ENCODE measurements at regions of chr1 and their contacts with region 1.

Region 1: GRCh38 chr1:78114034-78114956 is 68.5 kb downstream of the GIPC2 start:
- DNase-seq: peak; percentile 82
- H3K4me3 ChIP-seq: no peak overlapping the region
- H3K27ac ChIP-seq: no peak overlapping the region
- H3K4me1 ChIP-seq: no peaks in the 10 kb centered on the region
- H3K27me3 ChIP-seq: no peaks in the 10 kb centered on the region
- CTCF ChIP-seq: peak; percentile 96

Region 2: GRCh38 chr1:76901158-76901767 is 1213.0 kb before region 1 on chr1:
- CTCF ChIA-PET with region 1: no interaction called
- POLR2A ChIA-PET with region 1: no interaction called
- intact Hi-C with region 1: loop called (anchors 5 kb)
- DNase-seq: peak; percentile 69
- H3K4me3 ChIP-seq: no peak overlapping the region
- H3K27ac ChIP-seq: no peak overlapping the region
- H3K4me1 ChIP-seq: no peaks in the 10 kb centered on the region
- H3K27me3 ChIP-seq: peaks cover 6% of the 10 kb centered on the region
- CTCF ChIP-seq: peak; percentile 87

Region 3: GRCh38 chr1:77725706-77726105 is 388.6 kb before region 1 on chr1:
- CTCF ChIA-PET with region 1: no interaction called
- POLR2A ChIA-PET with region 1: no interaction called
- intact Hi-C with region 1: loop called (anchors 10 kb)
- DNase-seq: no peak
- H3K4me3 ChIP-seq: no peak overlapping the region
- H3K27ac ChIP-seq: no peak overlapping the region
- H3K4me1 ChIP-seq: no peaks in the 10 kb centered on the region
- H3K27me3 ChIP-seq: no peaks in the 10 kb centered on the region
- CTCF ChIP-seq: no peak

Region 4: GRCh38 chr1:77910116-77910515 is 204.2 kb before region 1 on chr1:
- CTCF ChIA-PET with region 1: no interaction called
- POLR2A ChIA-PET with region 1: no interaction called
- intact Hi-C with region 1: loop called (anchors 10 kb)
- DNase-seq: no peak
- H3K4me3 ChIP-seq: no peak overlapping the region
- H3K27ac ChIP-seq: no peak overlapping the region
- H3K4me1 ChIP-seq: no peaks in the 10 kb centered on the region
- H3K27me3 ChIP-seq: no peaks in the 10 kb centered on the region
- CTCF ChIP-seq: no peak

Region 5: GRCh38 chr1:78355656-78356055 is 241.4 kb after region 1 on chr1:
- CTCF ChIA-PET with region 1: no interaction called
- POLR2A ChIA-PET with region 1: no interaction called
- intact Hi-C with region 1: no loop called
- DNase-seq: no peak
- H3K4me3 ChIP-seq: no peak overlapping the region
- H3K27ac ChIP-seq: no peak overlapping the region
- H3K4me1 ChIP-seq: no peaks in the 10 kb centered on the region
- H3K27me3 ChIP-seq: no peaks in the 10 kb centered on the region
- CTCF ChIP-seq: no peak